ENCODE measurements at regions of chr3 and their contacts with region 1.

Region 1: GRCh38 chr3:54538346-54538745 is 389.5 kb downstream of the LRTM1 start:
- DNase-seq: no peak
- H3K4me3 ChIP-seq: no peak overlapping the region
- H3K4me3 Mint-ChIP-seq: no peak overlapping the region
- H3K27ac Mint-ChIP-seq: no peak overlapping the region
- H3K4me1 ChIP-seq: no peaks in the 10 kb centered on the region
- H3K4me1 Mint-ChIP-seq: no peaks in the 10 kb centered on the region
- H3K27me3 ChIP-seq: no peaks in the 10 kb centered on the region
- H3K27me3 Mint-ChIP-seq: peaks cover 14% of the 10 kb centered on the region
- CTCF ChIP-seq: peak in 1 of 2 experiments; percentile 19

Region 2: DNA sequence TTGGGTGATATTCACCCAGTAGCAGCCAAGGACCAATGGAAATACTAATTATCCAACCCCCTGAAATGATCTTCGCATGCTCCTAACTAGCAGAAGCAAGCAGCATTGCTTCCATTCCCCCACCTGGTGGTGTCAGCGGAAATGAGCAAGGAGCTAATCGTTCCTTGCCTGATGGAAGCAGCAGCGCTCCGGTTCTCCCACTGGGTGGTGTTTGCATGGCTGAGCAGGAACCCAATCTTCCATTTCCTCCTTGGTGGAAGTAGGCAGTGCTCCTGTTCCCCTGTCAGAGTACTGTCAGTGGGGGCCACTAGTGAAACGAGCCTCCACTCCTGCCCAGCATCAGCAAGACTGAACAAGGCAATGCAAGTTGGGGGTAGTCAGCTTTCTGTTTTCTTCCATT is 104.5 kb before region 1 on chr3:
- CTCF ChIA-PET with region 1: no interaction called
- POLR2A ChIA-PET with region 1: no interaction called
- intact Hi-C with region 1: loop called (anchors 10 kb)
- DNase-seq: peak; percentile 59 to 62
- H3K4me3 ChIP-seq: no peak overlapping the region
- H3K4me3 Mint-ChIP-seq: no peak overlapping the region
- H3K27ac Mint-ChIP-seq: no peak overlapping the region
- H3K4me1 ChIP-seq: no peaks in the 10 kb centered on the region
- H3K4me1 Mint-ChIP-seq: no peaks in the 10 kb centered on the region
- H3K27me3 ChIP-seq: no peaks in the 10 kb centered on the region
- H3K27me3 Mint-ChIP-seq: no peaks in the 10 kb centered on the region
- CTCF ChIP-seq: peak; percentile 34 to 52